HAP-1 (cell line): ENCODE measurements at regions of chrX and their contacts with region 1.

Region 1: GRCh38 chrX:38754102-38754790 is 47.0 kb upstream of the MID1IP1 start:
- DNase-seq: peak; percentile 45 to 61
- H3K4me3 ChIP-seq: no peak overlapping the region
- H3K4me1 ChIP-seq: no peaks in the 10 kb centered on the region
- H3K27me3 ChIP-seq: no peaks in the 10 kb centered on the region; the same call in 1 of the 2 replicates

Region 2: DNA sequence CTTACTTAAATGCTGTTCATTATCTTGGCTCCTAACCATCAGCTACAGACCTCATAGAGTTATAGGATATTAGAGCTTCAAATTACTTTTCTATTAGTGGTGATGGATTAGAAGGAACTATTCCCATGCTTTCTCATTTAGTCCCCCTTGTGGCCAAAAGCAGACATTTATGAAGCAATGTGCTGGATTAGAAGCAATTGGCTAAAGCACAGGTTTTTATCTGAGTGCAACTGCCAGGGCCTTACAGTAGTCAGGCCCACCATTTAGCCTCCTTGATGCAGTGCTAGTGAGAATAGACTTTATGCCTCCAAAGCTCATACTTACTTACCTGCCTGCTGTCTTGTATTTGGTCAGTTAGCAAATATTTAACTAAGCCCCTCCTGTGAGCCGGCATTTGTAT is 99.9 kb before region 1 on chrX:
- in situ Hi-C with region 1: no loop called
- DNase-seq: peak; percentile 19 to 25
- H3K4me3 ChIP-seq: no peak overlapping the region
- H3K4me1 ChIP-seq: no peaks in the 10 kb centered on the region
- H3K27me3 ChIP-seq: no peaks in the 10 kb centered on the region

Region 3: GRCh38 chrX:38985375-38985774 is 231.1 kb after region 1 on chrX:
- in situ Hi-C with region 1: loop called (anchors 10 kb)
- DNase-seq: peak; percentile 12 to 51
- H3K4me3 ChIP-seq: no peak overlapping the region
- H3K4me1 ChIP-seq: no peaks in the 10 kb centered on the region
- H3K27me3 ChIP-seq: no peaks in the 10 kb centered on the region

Region 4: GRCh38 chrX:39149761-39150160 is 395.5 kb after region 1 on chrX:
- in situ Hi-C with region 1: loop called (anchors 10 kb)
- DNase-seq: peak; percentile 31 to 79
- H3K4me3 ChIP-seq: no peak overlapping the region
- H3K4me1 ChIP-seq: no peaks in the 10 kb centered on the region
- H3K27me3 ChIP-seq: no peaks in the 10 kb centered on the region

Region 5: GRCh38 chrX:39427906-39428305 is 673.7 kb after region 1 on chrX:
- in situ Hi-C with region 1: no loop called
- DNase-seq: no peak
- H3K4me3 ChIP-seq: no peak overlapping the region
- H3K4me1 ChIP-seq: no peaks in the 10 kb centered on the region
- H3K27me3 ChIP-seq: no peaks in the 10 kb centered on the region